GM10248 (cell line): ENCODE measurements at regions of chr18 and their contacts with region 1.

Region 1: DNA sequence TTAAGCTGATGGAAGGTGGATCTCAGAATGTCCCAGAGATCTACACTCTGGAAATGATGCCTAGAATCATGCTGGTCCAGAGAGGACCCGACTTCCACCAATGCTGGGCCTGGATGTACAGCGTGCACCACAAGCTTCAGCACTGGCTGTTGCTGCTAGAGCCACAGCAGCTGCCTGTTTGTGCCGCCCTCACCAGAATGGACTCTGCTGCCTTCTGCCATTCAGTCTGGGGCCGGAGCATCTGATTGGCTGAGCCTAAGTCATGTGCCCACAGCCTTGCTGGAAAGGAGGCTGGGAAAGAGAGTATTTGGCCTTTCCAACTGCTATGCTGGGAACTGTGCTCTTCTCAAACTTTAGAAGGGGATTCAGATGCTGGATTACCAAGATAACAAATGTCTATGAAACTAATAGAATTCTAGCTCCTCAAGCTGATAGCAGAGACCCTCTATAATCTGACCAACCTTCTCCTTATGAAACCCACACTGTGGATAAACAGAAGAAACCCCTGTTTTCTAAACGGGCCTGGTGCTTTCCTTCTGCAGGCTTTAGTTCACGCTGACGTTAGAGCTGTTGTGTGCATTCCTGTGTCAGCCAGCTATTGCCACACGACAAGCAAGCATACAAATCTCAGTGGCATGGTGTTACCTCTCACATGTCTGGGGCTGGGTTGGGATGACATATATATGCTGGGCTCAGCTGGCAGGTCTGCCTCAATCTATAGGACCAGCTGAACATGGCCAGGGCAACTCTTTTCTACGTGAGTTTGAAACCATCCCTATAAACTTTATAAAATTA is 4.1 kb upstream of the LOXHD1 start:
- DNase-seq: no peak
- CTCF ChIP-seq: no peak

Region 2: GRCh38 chr18:45664824-45665763 is 996.1 kb before region 1 on chr18:
- CTCF ChIA-PET with region 1: interaction called, 16 read pairs
- POLR2A ChIA-PET with region 1: no interaction called
- DNase-seq: peak; percentile 76
- CTCF ChIP-seq: peak; percentile 92

Region 3: DNA sequence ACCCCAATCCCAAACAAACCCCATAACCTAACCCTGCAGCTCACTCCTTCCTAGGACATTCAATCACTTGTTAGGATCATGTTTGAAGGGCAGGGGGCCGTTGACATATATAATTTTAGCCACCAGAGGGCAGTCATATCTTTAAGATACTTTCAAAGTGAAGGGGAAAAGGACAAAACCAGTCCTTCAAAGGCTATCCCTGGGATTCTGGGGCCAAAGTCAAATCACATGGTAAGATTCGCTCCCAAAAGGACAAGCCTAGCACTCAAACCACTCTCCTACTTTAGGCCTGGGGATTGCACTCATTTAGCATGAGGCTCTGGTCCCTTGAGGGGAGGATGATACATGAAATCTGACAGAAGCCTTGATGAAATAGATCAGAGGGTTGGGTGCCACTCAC is 512.3 kb before region 1 on chr18:
- CTCF ChIA-PET with region 1: interaction called, 148 read pairs
- POLR2A ChIA-PET with region 1: no interaction called
- DNase-seq: peak; percentile 43
- CTCF ChIP-seq: peak; percentile 67

Region 4: GRCh38 chr18:46166261-46166970 is 494.7 kb before region 1 on chr18:
- CTCF ChIA-PET with region 1: interaction called, 33 read pairs
- POLR2A ChIA-PET with region 1: no interaction called
- DNase-seq: no peak
- CTCF ChIP-seq: no peak

Region 5: DNA sequence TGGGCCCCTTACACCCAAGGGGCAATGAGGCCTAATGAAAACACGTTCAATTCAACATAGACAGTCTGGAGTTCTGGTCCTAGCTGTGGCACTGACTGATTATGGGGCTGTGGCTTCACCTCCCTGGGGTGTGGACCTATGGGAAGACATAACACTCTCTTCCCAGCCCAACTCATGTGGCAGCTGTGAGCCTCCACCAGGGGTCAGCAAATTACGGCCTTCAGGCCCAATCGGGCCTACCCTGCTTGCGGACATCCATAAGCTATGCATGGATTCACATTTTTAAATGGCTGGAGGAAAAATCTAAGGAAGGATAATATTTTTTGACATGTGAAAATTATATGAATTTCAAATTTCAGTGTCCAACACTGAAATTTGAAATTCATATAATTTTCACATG is 105.4 kb before region 1 on chr18:
- CTCF ChIA-PET with region 1: interaction called, 36 read pairs
- POLR2A ChIA-PET with region 1: no interaction called
- DNase-seq: peak; percentile 57
- CTCF ChIP-seq: peak; percentile 48

Region 6: DNA sequence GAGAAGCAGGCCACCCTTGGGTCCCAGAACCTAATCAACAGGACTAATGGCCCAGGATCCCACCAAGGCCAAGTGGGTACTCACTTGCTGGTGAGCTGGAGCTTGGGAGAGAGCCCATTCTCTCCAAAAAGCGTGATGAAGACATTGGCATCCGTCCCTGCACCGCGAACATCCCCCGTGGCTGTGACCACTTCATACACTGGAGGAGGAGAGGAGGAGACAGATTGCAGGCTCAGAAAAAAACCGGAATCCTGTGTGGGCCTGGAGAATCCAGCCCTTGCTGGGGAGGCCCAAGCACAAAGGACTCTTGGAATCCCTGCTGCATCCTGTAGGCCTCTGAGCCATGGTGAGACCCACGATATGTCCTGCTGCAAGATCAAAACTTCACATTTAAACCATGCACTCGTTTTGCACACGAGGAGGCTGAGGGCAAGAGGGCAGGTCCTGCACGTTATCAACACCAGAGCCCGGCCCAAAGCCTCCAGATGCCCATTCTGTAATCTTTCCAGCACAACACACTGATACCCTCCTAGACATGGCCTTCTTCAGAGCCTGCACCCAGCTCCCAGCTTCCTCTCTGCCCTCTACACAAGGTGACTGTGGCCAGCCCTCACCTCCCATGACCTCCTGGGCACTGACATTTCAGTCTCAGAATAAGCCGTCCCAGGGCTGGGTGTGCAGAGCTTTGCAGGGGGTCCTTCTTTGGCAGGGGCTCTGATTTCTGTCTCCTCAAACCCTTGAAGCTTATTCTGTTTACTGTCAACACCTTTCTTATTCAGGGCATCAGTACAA is 11.9 kb before region 1 on chr18:
- CTCF ChIA-PET with region 1: interaction called, 39 read pairs
- POLR2A ChIA-PET with region 1: no interaction called
- DNase-seq: no peak
- CTCF ChIP-seq: no peak

Region 7: GRCh38 chr18:46892842-46893241 is 231.7 kb after region 1 on chr18:
- CTCF ChIA-PET with region 1: no interaction called
- POLR2A ChIA-PET with region 1: no interaction called
- DNase-seq: peak; percentile 21
- CTCF ChIP-seq: no peak